Ascending aorta (tissue), 2 donors: ENCODE measurements at regions of chr6 and their contacts with region 1.

Region 1: DNA sequence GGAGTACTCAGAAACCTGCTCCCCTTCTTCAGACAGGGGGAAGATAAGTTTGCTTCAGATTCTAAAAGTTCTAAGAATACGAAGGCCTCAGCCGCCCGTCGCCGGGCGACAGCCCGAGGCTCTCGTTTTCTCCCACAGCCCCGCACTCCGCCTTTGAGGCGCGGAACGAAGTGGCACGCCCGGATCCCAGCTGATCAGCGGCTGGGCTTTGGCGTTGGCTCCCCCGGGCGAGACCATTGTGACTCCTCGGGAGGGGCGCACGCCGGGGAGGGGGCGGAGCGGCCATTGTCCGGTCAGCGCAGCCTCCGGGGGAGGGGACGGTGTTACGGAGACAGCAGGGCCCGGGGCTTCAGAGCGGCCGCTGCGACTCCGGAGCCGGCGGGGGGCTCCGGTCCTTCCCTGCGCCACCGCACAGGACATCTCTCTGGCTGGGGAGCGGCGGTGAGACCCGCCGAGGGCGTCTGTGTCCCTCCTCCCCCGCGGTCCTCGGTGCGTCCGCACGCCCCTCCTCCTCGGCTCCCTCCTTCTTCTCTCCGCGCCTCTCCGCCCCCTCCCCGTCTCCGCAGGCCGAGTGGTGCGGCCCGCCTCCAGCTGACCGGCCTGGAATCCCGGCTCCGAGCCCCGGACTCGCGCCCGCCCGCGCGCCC is at the start of gene ZFAND3:
- DNase-seq: peak; percentile 78 to 98
- H3K4me3 ChIP-seq: peak within 1 kb of the TSS; percentile 60 to 92
- H3K27ac ChIP-seq: peak within 1 kb of the TSS; percentile 91
- H3K4me1 ChIP-seq: peaks cover 0 to 28% of the 10 kb centered on the region in 2 donors
- H3K27me3 ChIP-seq: no peaks in the 10 kb centered on the region
- CTCF ChIP-seq: no peak
- total RNA-seq, gene ZFAND3: 32.7 TPM

Region 2: DNA sequence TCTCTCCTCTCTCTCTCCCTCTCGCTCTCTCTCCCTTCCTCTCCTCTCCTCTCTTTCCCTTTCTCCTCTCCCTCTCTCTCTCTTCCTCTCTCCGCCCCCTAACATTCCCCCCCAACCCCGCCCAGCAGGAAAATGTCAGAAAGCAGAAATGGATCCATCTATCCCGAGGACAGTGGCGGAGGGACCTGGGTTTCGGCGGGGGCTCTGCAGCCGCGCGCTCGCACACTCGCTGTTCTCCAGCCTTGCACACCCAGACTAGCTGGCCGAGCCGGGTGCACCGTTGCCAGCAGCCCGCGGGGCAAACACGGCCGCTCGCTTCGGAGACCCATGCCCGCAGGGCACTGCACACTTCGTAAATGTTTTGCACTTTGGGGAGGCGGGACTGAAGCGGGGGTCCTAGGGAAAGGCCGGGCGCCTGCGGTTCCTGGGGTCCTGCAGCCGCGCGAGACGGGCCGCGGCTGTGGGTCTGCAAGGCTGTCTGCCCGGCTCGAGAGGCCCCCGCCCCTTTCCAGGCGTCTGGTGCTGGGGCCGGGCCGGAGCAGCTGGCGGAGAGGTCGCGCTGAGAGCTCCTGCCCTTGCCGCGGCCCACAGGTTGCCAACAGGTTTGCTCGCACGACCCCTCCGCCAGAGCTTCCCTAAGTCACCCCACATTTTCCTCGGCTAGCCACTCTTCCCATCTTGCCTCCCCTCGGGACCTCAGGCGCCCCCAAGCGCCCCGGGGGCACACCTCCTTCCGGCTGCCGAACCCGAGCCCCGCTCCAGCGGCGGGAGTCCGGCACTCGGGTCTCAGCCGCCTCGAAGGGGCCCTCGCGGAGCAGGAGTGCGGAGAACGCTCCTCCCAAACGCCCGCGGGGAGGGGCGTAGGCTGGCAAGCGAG is 120.8 kb before region 1 on chr6:
- intact Hi-C with region 1: loop called (anchors 5 kb)
- DNase-seq: peak in 1 of 2 donors; percentile 69
- H3K4me3 ChIP-seq: peak overlapping the region; percentile 71 to 72
- H3K27ac ChIP-seq: peak overlapping the region; percentile 4 to 74
- H3K4me1 ChIP-seq: peaks cover 9 to 25% of the 10 kb centered on the region in 2 donors
- H3K27me3 ChIP-seq: no peaks in the 10 kb centered on the region
- CTCF ChIP-seq: peak in 1 of 3 experiments; percentile 26

Region 3: DNA sequence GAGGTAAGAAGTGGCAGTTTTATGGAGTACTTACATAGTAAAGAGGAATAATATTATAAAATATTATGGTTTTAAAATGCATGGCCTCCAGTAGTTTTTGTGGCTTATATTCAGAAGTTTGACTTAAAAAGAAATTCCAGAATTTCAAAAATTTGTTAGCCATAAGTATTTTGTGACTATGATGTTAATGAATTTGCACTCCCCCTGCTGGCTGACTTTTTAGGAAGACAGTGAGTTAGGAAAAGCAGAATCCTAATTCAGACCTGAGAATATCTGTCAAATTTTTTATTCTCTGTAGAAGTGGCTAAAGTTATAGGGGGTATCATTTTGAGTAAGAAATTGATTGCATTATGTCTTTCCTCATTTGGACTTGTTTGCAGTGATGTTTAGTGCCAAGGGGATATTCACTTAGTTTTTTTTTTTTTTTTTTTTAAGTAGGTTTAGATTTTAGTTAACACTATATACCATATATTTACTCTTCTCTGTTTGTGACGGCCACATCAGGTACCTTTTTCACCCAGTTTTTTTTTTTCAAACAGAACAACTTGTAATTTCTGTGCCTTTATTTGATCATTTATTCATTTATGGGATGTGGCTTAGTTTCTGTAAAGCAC is 41.0 kb after region 1 on chr6:
- intact Hi-C with region 1: loop called (anchors 5 kb)
- DNase-seq: no peak
- H3K4me3 ChIP-seq: no peak overlapping the region
- H3K27ac ChIP-seq: no peak overlapping the region
- H3K4me1 ChIP-seq: peaks cover 0 to 14% of the 10 kb centered on the region in 2 donors
- H3K27me3 ChIP-seq: no peaks in the 10 kb centered on the region
- CTCF ChIP-seq: peak; percentile 20 to 54 (median 47)